ENCODE measurements at regions of chr20 and their contacts with region 1.

Region 1: GRCh38 chr20:41136680-41137613 is at the start of gene PLCG1:
- DNase-seq: peak; percentile 81
- H3K4me3 Mint-ChIP-seq: peak within 1 kb of the TSS; percentile 88
- H3K27ac Mint-ChIP-seq: peak within 1 kb of the TSS; percentile 82
- H3K4me1 Mint-ChIP-seq: peaks cover 60% of the 10 kb centered on the region
- H3K27me3 Mint-ChIP-seq: no peaks in the 10 kb centered on the region
- total RNA-seq, gene PLCG1: 174 and 187 TPM in 2 replicates

Region 2: DNA sequence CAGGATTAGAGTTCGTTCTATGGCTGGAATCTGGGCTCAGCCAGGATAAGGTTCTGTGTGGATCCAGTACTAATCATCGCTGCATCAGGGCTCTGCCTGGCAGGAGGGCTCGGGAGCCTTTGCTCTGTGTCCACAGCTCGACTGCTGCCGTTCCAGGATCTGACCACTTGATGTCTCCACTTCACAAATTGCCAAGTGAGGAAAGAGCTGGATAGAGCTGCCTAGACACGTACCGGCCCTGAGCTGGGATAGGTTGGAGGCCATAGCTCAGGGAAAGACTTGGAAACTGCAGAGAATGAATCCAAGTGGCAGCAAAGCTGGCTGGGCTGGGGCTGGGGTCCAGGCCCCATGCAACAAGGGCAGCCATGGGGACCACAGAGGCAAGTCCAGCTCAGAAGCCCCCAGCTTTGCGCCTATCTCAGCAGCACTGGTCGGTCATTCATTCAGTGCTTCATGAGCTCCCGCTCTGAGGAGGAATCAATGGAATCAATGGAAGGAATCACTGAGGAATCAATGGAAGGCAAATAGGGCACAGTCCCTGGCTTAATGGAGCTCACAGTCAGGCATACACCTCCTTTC is 146.3 kb before region 1 on chr20:
- intact Hi-C with region 1: no loop called
- DNase-seq: peak; percentile 59
- H3K4me3 Mint-ChIP-seq: no peak overlapping the region
- H3K27ac Mint-ChIP-seq: peak overlapping the region; percentile 69
- H3K4me1 Mint-ChIP-seq: peaks cover 33% of the 10 kb centered on the region
- H3K27me3 Mint-ChIP-seq: no peaks in the 10 kb centered on the region

Region 3: GRCh38 chr20:41003143-41003883 is 133.6 kb before region 1 on chr20:
- intact Hi-C with region 1: loop called (anchors 5 kb)
- DNase-seq: peak; percentile 66
- H3K4me3 Mint-ChIP-seq: peak overlapping the region; percentile 51
- H3K27ac Mint-ChIP-seq: peak overlapping the region; percentile 94
- H3K4me1 Mint-ChIP-seq: peaks cover 43% of the 10 kb centered on the region
- H3K27me3 Mint-ChIP-seq: no peaks in the 10 kb centered on the region

Region 4: GRCh38 chr20:41047975-41048305 is 89.0 kb before region 1 on chr20:
- intact Hi-C with region 1: loop called (anchors 5 kb)
- DNase-seq: no peak
- H3K4me3 Mint-ChIP-seq: peak overlapping the region; percentile 78
- H3K27ac Mint-ChIP-seq: peak overlapping the region; percentile 91
- H3K4me1 Mint-ChIP-seq: peaks cover 83% of the 10 kb centered on the region
- H3K27me3 Mint-ChIP-seq: no peaks in the 10 kb centered on the region

Region 5: DNA sequence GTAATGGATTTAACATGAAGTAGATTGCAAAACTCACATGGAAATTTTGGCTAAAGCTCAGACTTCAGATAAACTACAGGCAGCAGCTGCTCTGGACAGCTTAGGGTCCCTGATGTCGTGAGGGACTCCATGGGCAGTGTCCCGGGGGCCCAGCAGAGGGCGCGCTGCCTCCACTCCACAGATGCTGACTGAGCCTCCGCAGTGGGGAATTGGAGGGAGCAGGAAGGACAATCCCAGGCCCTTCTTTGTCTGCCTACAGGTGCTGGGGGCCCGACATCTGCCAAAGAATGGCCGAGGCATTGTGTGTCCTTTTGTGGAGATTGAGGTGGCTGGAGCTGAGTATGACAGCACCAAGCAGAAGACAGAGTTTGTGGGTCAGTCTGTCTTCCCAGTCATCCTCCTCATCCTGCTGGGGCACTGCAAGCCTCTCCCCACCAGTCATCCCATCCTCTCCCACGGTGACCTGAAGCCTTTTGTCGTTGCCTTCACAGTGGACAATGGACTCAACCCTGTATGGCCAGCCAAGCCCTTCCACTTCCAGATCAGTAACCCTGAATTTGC is 36.3 kb after region 1 on chr20:
- intact Hi-C with region 1: loop called (anchors 5 kb)
- DNase-seq: no peak
- H3K4me3 Mint-ChIP-seq: no peak overlapping the region
- H3K27ac Mint-ChIP-seq: no peak overlapping the region
- H3K4me1 Mint-ChIP-seq: peaks cover 2% of the 10 kb centered on the region
- H3K27me3 Mint-ChIP-seq: no peaks in the 10 kb centered on the region

Region 6: DNA sequence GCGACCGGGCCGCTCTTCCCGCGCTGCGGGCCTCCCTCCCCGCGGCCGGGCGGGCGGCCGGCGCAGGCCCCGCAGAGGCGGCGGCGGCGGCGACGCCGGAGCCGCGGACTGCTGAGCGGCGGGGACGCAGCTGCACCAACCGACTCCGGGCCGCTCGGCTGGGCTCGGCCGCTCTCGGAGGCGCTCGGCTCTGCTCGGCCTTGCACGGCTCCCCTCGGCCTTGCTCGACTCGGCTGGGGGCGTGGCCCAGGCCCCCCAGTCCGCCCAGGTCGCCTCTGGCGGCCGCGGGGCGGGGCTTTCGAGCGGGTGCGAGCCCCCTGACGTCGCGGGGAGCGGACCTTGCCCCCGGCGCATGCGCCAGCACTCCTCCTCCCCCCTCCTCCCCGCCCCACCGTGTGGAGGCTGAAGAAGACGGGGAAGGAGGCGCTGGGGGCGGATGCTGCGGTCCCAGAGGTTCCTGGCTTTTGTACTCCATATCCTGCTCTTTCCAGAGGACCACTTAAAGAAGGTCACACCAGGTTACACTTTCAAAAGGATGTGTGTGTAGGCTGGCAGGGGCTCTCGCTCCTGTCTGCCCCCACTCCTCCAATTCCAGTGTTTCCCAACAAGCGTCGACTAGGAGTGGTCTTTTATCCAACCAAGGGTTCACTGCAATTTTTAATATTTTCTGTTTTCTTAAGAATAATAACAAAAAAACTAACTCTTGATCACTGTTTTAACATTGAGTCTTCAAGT is 180.8 kb after region 1 on chr20 and contains the start of gene ZHX3:
- intact Hi-C with region 1: loop called (anchors 1 kb)
- DNase-seq: peak; percentile 94
- H3K4me3 Mint-ChIP-seq: peak within 1 kb of the TSS; percentile 84
- H3K27ac Mint-ChIP-seq: peak within 1 kb of the TSS; percentile 70
- H3K4me1 Mint-ChIP-seq: peaks cover 26% of the 10 kb centered on the region
- H3K27me3 Mint-ChIP-seq: peaks cover 4% of the 10 kb centered on the region
- total RNA-seq, gene ZHX3: 8.2 and 11.4 TPM in 2 replicates

Region 7: GRCh38 chr20:41693136-41693979 is 556.4 kb after region 1 on chr20:
- intact Hi-C with region 1: loop called (anchors 10 kb)
- DNase-seq: peak; percentile 73
- H3K4me3 Mint-ChIP-seq: peak overlapping the region; percentile 98
- H3K27ac Mint-ChIP-seq: peak overlapping the region; percentile 96
- H3K4me1 Mint-ChIP-seq: peaks cover 18% of the 10 kb centered on the region
- H3K27me3 Mint-ChIP-seq: peaks cover 5% of the 10 kb centered on the region

Measured in activated T-helper 2 cell treated with anti-CD3 and anti-CD28 coated beads, Interferon-gamma antibody, Interleukin-2, Interleukin-4, amounts not matched to agents 10 μg/mL and 5 μg/mL and 100 μg/mL, durations not matched to agents 14 hours and 24 hours and 36 hours (primary cell).